Activated CD4-positive, alpha-beta T cell treated with anti-CD3 and anti-CD28 coated beads for 36 hours (primary cell): ENCODE measurements at regions of chr14 and their contacts with region 1.

Region 1: GRCh38 chr14:20343092-20343861 is at the start of gene PARP2:
- DNase-seq: peak; percentile 97
- ATAC-seq: peak; percentile 95
- H3K4me3 Mint-ChIP-seq: peak within 1 kb of the TSS; percentile 89
- H3K27ac Mint-ChIP-seq: peak within 1 kb of the TSS; percentile 92
- H3K4me1 Mint-ChIP-seq: peaks cover 20% of the 10 kb centered on the region
- H3K27me3 Mint-ChIP-seq: no peaks in the 10 kb centered on the region
- total RNA-seq, gene PARP2: 39.4 to 41.8 TPM

Region 2: GRCh38 chr14:20305265-20306078 is 37.8 kb before region 1 on chr14 and contains the start of gene TTC5:
- CTCF ChIA-PET with region 1: interaction called, 4 read pairs
- POLR2A ChIA-PET with region 1: no interaction called
- intact Hi-C with region 1: loop called in 1 of 2 experiments (anchors 1 kb)
- DNase-seq: peak; percentile 92
- ATAC-seq: peak; percentile 98
- H3K4me3 Mint-ChIP-seq: peak within 1 kb of the TSS; percentile 82
- H3K27ac Mint-ChIP-seq: peak within 1 kb of the TSS; percentile 82
- H3K4me1 Mint-ChIP-seq: peaks cover 23% of the 10 kb centered on the region
- H3K27me3 Mint-ChIP-seq: no peaks in the 10 kb centered on the region
- total RNA-seq, gene TTC5: 21.6 to 23.5 TPM

Region 3: DNA sequence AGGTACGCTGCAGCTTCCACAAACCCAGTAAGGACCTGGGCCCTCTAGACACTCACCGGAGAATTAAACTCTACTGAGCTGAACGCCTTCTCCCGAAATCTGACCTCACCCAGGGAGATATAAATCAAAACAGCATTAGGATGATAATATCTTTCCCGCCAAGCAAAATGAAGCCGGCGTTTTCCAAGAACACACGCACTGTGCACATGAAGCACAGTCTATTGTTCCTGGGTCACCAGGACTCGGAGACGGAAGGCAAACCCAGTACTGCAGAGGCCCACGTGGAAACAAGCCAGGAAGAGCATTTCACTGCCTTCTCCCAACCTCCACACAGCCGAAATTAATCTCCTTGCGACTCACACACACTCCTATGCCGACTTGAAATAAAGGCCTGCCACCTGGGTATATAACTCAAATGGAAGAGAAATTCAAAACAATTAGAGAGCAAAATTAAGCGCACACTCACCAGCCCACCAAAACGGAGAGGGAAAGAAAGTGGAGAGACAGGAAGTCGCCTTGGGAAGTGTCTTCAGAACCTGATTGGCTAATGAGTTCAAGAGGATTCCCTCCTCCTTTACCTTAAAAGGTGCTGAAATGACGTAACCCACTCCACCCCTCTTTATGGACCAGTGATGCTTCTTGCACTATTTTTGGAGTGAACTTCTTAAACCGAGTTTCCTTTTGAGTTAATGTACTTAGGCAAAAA is 10.3 kb before region 1 on chr14 and contains the start of gene CCNB1IP1:
- CTCF ChIA-PET with region 1: interaction called, 81 read pairs
- POLR2A ChIA-PET with region 1: interaction called, 32 read pairs
- intact Hi-C with region 1: loop called (anchors 1 kb)
- DNase-seq: peak; percentile 59
- ATAC-seq: peak; percentile 99
- H3K4me3 Mint-ChIP-seq: peak within 1 kb of the TSS; percentile 98
- H3K27ac Mint-ChIP-seq: peak within 1 kb of the TSS; percentile 95
- H3K4me1 Mint-ChIP-seq: peaks cover 35% of the 10 kb centered on the region
- H3K27me3 Mint-ChIP-seq: no peaks in the 10 kb centered on the region
- total RNA-seq, gene CCNB1IP1: 57.4 to 67.0 TPM

Region 4: GRCh38 chr14:20400965-20401593 is 57.8 kb after region 1 on chr14:
- CTCF ChIA-PET with region 1: interaction called, 3 read pairs
- POLR2A ChIA-PET with region 1: interaction called, 4 read pairs
- intact Hi-C with region 1: loop called (anchors 1 to 2 kb)
- DNase-seq: peak; percentile 37
- ATAC-seq: peak; percentile 95
- H3K4me3 Mint-ChIP-seq: peak overlapping the region; percentile 29
- H3K27ac Mint-ChIP-seq: peak overlapping the region; percentile 88
- H3K4me1 Mint-ChIP-seq: peaks cover 34% of the 10 kb centered on the region
- H3K27me3 Mint-ChIP-seq: no peaks in the 10 kb centered on the region

Region 5: GRCh38 chr14:20454516-20455354 is 111.5 kb after region 1 on chr14 and contains the starts of genes APEX1 and OSGEP:
- CTCF ChIA-PET with region 1: interaction called, 7 read pairs
- POLR2A ChIA-PET with region 1: interaction called, 44 read pairs
- intact Hi-C with region 1: loop called (anchors 1 kb)
- DNase-seq: peak; percentile 99
- ATAC-seq: peak; percentile 89
- H3K4me3 Mint-ChIP-seq: no peak within 1 kb of the TSS
- H3K27ac Mint-ChIP-seq: no peak within 1 kb of the TSS
- H3K4me1 Mint-ChIP-seq: peaks cover 18% of the 10 kb centered on the region
- H3K27me3 Mint-ChIP-seq: no peaks in the 10 kb centered on the region
- total RNA-seq, gene APEX1: 216 to 257 TPM
- total RNA-seq, gene OSGEP: 46.2 to 47.5 TPM

Region 6: DNA sequence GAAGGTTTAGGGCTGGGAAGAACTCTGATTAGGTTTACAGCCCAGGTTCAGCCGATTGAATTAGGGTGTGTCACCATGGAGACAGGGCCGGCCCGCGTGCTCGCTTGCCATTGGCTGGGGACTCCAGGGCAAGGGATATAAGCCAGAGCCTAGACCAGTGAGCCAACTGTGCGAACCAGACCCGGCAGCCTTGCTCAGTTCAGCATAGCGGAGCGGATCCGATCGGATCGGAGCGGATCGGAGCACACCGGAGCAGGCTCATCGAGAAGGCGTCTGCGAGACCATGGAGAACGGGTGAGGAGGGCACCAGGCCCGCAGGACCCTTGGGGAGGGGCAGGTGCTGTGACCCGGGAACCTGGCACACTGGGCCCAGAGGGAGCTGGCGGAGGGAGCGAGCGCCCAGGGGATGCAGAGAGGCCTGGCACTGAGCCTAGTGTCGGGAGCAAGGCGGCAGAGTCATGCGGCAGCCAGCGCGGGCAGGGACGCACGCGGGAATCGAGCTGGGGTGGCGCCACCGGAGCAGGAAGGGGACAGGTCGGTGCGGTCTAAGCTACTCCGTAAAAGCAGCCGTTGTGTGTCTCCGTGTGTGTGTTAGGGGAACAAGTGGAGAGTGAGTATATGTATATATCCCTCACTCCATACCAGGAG is 126.1 kb after region 1 on chr14 and contains the start of gene PNP:
- CTCF ChIA-PET with region 1: interaction called, 6 read pairs
- POLR2A ChIA-PET with region 1: interaction called, 18 read pairs
- intact Hi-C with region 1: loop called (anchors 1 kb)
- DNase-seq: peak; percentile 93
- ATAC-seq: peak; percentile 93
- H3K4me3 Mint-ChIP-seq: peak within 1 kb of the TSS; percentile 91
- H3K27ac Mint-ChIP-seq: peak within 1 kb of the TSS; percentile 97
- H3K4me1 Mint-ChIP-seq: peaks cover 37% of the 10 kb centered on the region
- H3K27me3 Mint-ChIP-seq: no peaks in the 10 kb centered on the region
- total RNA-seq, gene PNP: 160 to 164 TPM

Region 7: DNA sequence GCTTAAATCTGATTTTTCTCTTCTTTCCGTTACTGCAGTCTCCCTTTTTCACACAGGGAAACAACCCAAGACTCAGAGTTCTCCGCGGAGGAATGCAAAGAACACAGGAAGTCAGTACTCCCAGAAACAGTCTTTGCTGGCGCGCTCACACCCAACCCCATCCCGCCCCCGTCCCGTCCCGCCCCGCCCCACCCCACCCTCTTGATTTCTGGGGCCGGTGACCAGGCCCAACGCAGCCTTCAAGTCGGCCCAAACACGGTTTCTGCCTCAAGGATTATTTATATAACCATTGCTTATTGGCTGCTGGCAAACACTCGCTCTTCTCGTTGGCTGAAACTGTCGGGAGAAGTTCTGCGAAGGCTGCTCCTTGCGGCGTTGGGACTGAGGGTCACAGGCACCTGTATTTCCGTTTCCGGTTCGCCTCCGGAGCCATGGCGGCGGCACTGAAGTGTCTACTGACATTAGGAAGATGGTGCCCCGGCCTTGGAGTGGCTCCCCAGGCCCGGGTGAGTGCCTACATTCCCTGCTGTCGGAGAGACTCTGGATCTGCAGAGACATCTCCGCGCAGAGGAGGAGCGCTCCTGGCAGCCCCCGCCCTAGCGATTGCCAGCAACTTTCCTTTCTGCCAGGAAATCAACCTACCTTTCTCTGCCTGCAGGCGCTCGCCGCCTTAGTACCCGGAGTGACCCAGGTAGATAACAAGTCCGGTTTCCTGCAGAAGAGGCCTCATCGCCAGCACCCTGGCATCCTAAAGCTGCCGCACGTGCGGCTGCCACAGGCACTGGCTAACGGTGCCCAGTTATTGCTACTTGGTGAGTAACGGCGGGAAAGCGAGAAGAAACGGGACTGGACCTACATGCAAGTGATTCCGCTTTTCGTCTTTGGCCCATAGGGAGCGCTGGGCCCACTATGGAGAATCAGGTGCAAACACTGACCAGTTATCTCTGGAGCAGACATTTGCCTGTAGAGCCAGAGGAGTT is 646.6 kb after region 1 on chr14 and contains the start of gene METTL17:
- CTCF ChIA-PET with region 1: no interaction called
- POLR2A ChIA-PET with region 1: no interaction called
- intact Hi-C with region 1: loop called in 1 of 2 experiments (anchors 1 kb)
- DNase-seq: peak; percentile 93
- ATAC-seq: peak; percentile 97
- H3K4me3 Mint-ChIP-seq: peak within 1 kb of the TSS; percentile 92
- H3K27ac Mint-ChIP-seq: peak within 1 kb of the TSS; percentile 89
- H3K4me1 Mint-ChIP-seq: peaks cover 37% of the 10 kb centered on the region
- H3K27me3 Mint-ChIP-seq: no peaks in the 10 kb centered on the region
- total RNA-seq, gene METTL17: 89.3 to 90.0 TPM